ENCODE measurements at regions of chr14 and their contacts with region 1.

Region 1: GRCh38 chr14:24431569-24432258 is 2.0 kb downstream of the KHNYN start:
- DNase-seq: peak; percentile 78 to 96 (median 86)
- ATAC-seq: peak; percentile 53
- H3K4me3 ChIP-seq: peak overlapping the region; percentile 80
- H3K4me3 Mint-ChIP-seq: peak overlapping the region; percentile 92
- H3K27ac ChIP-seq: peak overlapping the region; percentile 92 to 94
- H3K27ac Mint-ChIP-seq: peak overlapping the region; percentile 97
- H3K4me1 ChIP-seq: peaks cover 63% of the 10 kb centered on the region
- H3K4me1 Mint-ChIP-seq: peaks cover 64% of the 10 kb centered on the region
- H3K27me3 ChIP-seq: no peaks in the 10 kb centered on the region
- H3K27me3 Mint-ChIP-seq: no peaks in the 10 kb centered on the region
- CTCF ChIP-seq: peak; percentile 89

Region 2: DNA sequence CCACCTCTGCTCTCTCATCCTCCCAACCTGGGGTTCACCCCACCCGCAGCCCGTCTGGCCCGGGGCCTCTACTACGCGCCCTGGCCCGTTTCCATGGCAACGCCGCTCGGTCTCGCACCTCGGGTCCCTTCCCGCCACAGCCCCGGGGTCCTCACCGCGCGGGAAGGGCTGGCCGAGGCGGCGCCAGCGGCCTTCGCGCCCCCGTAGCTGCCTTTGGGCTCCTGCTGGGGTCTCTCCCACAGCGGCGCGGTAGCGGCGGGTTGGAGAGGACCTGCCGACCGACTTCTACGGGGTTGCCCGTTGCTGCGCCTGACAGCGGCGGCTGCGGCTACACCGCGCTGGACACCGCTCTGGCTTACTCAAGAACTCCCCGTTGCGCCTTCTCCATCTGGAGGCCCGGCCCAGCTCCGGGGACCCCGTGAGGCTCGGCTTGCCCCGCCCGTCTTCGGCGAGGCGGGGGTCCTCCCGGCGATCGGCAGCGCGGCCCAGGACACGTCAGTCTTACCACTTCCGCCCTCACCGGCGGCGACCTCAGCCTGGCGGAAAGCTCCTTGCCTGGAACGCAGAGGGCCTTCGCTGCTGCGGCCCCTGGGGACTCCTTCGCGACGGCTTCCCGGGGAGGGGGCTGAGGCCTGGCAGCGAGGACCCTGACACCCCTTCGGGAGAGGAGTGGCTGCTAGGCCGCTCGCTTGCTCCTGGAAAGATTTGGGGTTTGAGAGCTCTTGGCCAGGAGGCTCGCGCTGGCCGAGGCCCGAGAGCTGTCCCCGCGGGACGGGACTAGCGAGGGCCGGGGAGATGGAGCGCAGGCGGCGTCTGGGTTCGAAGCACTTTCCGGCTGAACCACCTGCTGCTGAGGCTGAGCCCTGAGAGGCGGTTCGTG is 236.3 kb before region 1 on chr14 and contains the start of gene TM9SF1:
- CTCF ChIA-PET with region 1: no interaction called
- POLR2A ChIA-PET with region 1: interaction called, 14 read pairs
- intact Hi-C with region 1: no loop called
- DNase-seq: peak; percentile 78 to 95 (median 86)
- ATAC-seq: peak; percentile 88
- H3K4me3 ChIP-seq: peak within 1 kb of the TSS; percentile 93
- H3K4me3 Mint-ChIP-seq: peak within 1 kb of the TSS; percentile 87
- H3K27ac ChIP-seq: peak within 1 kb of the TSS; percentile 97 to 99
- H3K27ac Mint-ChIP-seq: peak within 1 kb of the TSS; percentile 92
- H3K4me1 ChIP-seq: peaks cover 37% of the 10 kb centered on the region
- H3K4me1 Mint-ChIP-seq: peaks cover 51% of the 10 kb centered on the region
- H3K27me3 ChIP-seq: no peaks in the 10 kb centered on the region
- H3K27me3 Mint-ChIP-seq: no peaks in the 10 kb centered on the region
- CTCF ChIP-seq: no peak
- total RNA-seq, gene TM9SF1: 12.9 to 13.0 TPM

Region 3: DNA sequence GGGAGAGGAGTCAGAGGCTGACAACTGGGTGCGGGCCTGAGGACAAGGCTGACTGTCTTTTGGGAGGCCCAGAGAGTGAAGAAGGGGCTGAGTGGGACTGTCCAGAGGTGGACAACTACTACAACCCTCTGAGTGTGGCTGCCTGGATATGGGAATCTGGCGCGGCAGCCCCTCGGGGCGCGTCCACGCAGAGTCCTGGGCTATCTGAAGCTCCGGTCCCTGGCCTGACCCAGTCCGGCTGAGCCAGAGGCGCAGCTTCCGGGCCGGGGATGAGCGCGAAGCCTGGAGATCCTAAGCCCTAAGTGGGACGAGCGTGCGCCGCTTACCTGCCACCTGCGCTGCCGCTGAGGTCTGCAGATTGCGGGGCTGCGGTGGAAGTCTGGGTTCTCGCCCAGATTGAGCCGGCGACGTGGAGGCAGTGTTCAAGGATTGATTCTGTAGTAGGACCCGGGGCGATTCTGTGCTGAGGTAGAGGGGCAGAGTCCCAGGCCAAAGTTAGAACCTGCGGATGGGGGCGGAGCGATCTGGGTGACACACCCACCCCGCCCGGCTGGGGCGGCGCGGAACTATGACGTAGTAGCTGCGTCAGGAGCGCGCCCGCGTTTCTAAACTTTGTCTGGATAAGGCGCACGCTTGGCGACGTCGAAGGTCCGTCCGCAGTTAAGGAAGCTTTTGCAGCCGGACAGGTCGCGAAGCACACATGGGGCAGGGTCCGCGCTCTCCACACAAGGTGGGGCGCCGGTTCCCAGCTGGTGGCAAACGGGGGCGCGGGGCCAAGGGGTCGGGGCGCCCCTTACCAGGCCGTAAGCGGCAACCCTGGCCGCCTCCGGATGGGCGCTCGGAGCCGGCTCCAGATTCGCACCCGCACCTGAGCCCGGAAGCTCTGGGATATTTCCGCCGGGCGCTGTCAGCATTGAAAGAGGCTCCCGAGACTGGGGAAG is 132.2 kb before region 1 on chr14 and contains the starts of genes DHRS1 and NOP9:
- CTCF ChIA-PET with region 1: interaction called, 8 read pairs
- POLR2A ChIA-PET with region 1: interaction called, 15 read pairs
- intact Hi-C with region 1: no loop called
- DNase-seq: peak; percentile 86 to 98 (median 92)
- ATAC-seq: peak; percentile 77
- H3K4me3 ChIP-seq: peak within 1 kb of the TSS; percentile 87
- H3K4me3 Mint-ChIP-seq: peak within 1 kb of the TSS; percentile 99
- H3K27ac ChIP-seq: peak within 1 kb of the TSS; percentile 81 to 87
- H3K27ac Mint-ChIP-seq: peak within 1 kb of the TSS; percentile 98
- H3K4me1 ChIP-seq: peaks cover 56% of the 10 kb centered on the region
- H3K4me1 Mint-ChIP-seq: peaks cover 64% of the 10 kb centered on the region
- H3K27me3 ChIP-seq: no peaks in the 10 kb centered on the region
- H3K27me3 Mint-ChIP-seq: no peaks in the 10 kb centered on the region
- CTCF ChIP-seq: no peak
- total RNA-seq, gene DHRS1: 21.5 to 23.5 TPM
- total RNA-seq, gene NOP9: 25.9 to 27.5 TPM

Region 4: GRCh38 chr14:24332268-24332993 is 99.3 kb before region 1 on chr14:
- CTCF ChIA-PET with region 1: interaction called, 89 read pairs
- POLR2A ChIA-PET with region 1: interaction called, 270 read pairs
- intact Hi-C with region 1: loop called (anchors 1 kb)
- DNase-seq: peak; percentile 75 to 95 (median 84)
- ATAC-seq: peak; percentile 93
- H3K4me3 ChIP-seq: peak overlapping the region; percentile 48
- H3K4me3 Mint-ChIP-seq: peak overlapping the region; percentile 86
- H3K27ac ChIP-seq: no peak overlapping the region
- H3K27ac Mint-ChIP-seq: peak overlapping the region; percentile 52
- H3K4me1 ChIP-seq: peaks cover 78% of the 10 kb centered on the region
- H3K4me1 Mint-ChIP-seq: peaks cover 59% of the 10 kb centered on the region
- H3K27me3 ChIP-seq: peaks cover 26 to 27% of the 10 kb centered on the region in 2 experiments
- H3K27me3 Mint-ChIP-seq: peaks cover 49% of the 10 kb centered on the region
- CTCF ChIP-seq: peak; percentile 81

Region 5: GRCh38 chr14:24418492-24418873 is 13.2 kb before region 1 on chr14:
- CTCF ChIA-PET with region 1: interaction called, 9 read pairs
- POLR2A ChIA-PET with region 1: interaction called, 14 read pairs
- intact Hi-C with region 1: no loop called
- DNase-seq: no peak
- ATAC-seq: no peak
- H3K4me3 ChIP-seq: no peak overlapping the region
- H3K4me3 Mint-ChIP-seq: no peak overlapping the region
- H3K27ac ChIP-seq: no peak overlapping the region
- H3K27ac Mint-ChIP-seq: no peak overlapping the region
- H3K4me1 ChIP-seq: peaks cover 13% of the 10 kb centered on the region
- H3K4me1 Mint-ChIP-seq: no peaks in the 10 kb centered on the region
- H3K27me3 ChIP-seq: no peaks in the 10 kb centered on the region
- H3K27me3 Mint-ChIP-seq: peaks cover 5% of the 10 kb centered on the region
- CTCF ChIP-seq: no peak

Region 6: GRCh38 chr14:24565766-24566165 is 134.1 kb after region 1 on chr14:
- CTCF ChIA-PET with region 1: no interaction called
- POLR2A ChIA-PET with region 1: no interaction called
- intact Hi-C with region 1: no loop called
- DNase-seq: no peak
- ATAC-seq: no peak
- H3K4me3 ChIP-seq: no peak overlapping the region
- H3K4me3 Mint-ChIP-seq: no peak overlapping the region
- H3K27ac ChIP-seq: no peak overlapping the region
- H3K27ac Mint-ChIP-seq: no peak overlapping the region
- H3K4me1 ChIP-seq: no peaks in the 10 kb centered on the region
- H3K4me1 Mint-ChIP-seq: no peaks in the 10 kb centered on the region
- H3K27me3 ChIP-seq: peaks cover 0 to 9% of the 10 kb centered on the region in 2 experiments
- H3K27me3 Mint-ChIP-seq: peaks cover 14% of the 10 kb centered on the region
- CTCF ChIP-seq: no peak

Region 7: GRCh38 chr14:24798911-24799462 is 367.3 kb after region 1 on chr14:
- CTCF ChIA-PET with region 1: no interaction called
- POLR2A ChIA-PET with region 1: no interaction called
- intact Hi-C with region 1: no loop called
- DNase-seq: peak in 1 of 14 experiments; percentile 14
- ATAC-seq: no peak
- H3K4me3 ChIP-seq: no peak overlapping the region
- H3K4me3 Mint-ChIP-seq: no peak overlapping the region
- H3K27ac ChIP-seq: no peak overlapping the region
- H3K27ac Mint-ChIP-seq: no peak overlapping the region
- H3K4me1 ChIP-seq: no peaks in the 10 kb centered on the region
- H3K4me1 Mint-ChIP-seq: no peaks in the 10 kb centered on the region
- H3K27me3 ChIP-seq: peaks cover 0 to 2% of the 10 kb centered on the region in 2 experiments
- H3K27me3 Mint-ChIP-seq: peaks cover 15% of the 10 kb centered on the region
- CTCF ChIP-seq: no peak

Measured in CD4-positive, alpha-beta T cell (primary cell).